ENCODE measurements at regions of chr2 and their contacts with region 1.

Region 1: GRCh38 chr2:218301176-218301819 is 9.0 kb upstream of the TMBIM1 start:
- DNase-seq: peak; percentile 82
- ATAC-seq: peak; percentile 97
- H3K4me3 ChIP-seq: no peak overlapping the region
- H3K27ac ChIP-seq: no peak overlapping the region
- H3K4me1 ChIP-seq: no peaks in the 10 kb centered on the region
- H3K27me3 ChIP-seq: no peaks in the 10 kb centered on the region
- CTCF ChIP-seq: peak; percentile 90 to 93 (median 92)
- EP300 ChIP-seq: no peak
- POLR2A ChIP-seq: no peak
- RAD21 ChIP-seq: peak; percentile 97

Region 2: DNA sequence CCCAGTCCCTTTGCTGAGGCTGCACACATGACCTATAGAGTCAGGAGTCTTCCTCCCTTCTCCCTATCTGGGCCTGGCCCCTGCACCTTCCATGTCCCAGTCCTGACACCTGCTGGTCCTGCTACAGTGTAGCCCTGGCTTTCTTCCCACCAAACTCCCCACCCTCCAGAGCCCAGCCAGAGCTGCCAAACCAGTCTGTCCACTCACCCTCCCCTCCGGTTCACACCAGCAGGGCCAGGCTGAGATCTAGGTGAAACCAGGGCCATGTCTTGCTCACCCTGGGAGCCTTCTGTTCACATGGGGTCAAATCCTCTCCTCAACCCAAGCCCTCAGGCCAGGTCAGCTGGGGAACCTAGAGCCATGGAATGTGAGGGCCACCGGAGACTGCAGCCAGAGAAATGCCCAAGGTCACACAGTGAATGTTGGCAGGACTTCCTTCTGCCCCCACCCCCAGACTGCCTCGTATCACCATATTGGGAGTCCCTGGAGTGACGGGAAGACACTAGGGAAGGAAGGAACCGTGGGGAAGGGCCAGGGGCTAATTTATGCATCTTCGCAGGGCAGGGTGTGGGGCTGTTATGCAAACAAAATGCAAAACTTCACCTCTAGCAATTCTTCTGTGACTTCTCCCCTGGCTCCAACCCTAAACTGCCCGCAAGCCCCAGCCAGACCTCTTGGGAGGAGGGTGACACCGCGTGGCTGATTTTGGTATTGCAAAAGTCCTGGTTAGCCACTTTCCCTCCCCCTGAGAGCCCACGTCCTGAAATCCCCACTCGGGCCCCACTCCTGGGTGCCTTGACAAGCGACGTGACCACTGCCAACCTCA is 313.1 kb before region 1 on chr2:
- CTCF ChIA-PET with region 1: no interaction called
- POLR2A ChIA-PET with region 1: no interaction called
- RAD21 ChIA-PET with region 1: no interaction called
- SMC1A ChIA-PET with region 1: no interaction called
- in situ Hi-C with region 1: no loop called
- intact Hi-C with region 1: no loop called
- DNase-seq: no peak
- ATAC-seq: peak; percentile 94
- H3K4me3 ChIP-seq: no peak overlapping the region
- H3K27ac ChIP-seq: no peak overlapping the region
- H3K4me1 ChIP-seq: no peaks in the 10 kb centered on the region
- H3K27me3 ChIP-seq: no peaks in the 10 kb centered on the region; a peak in 1 of 4 replicates
- CTCF ChIP-seq: peak; percentile 78 to 82 (median 81)
- EP300 ChIP-seq: no peak
- POLR2A ChIP-seq: no peak
- RAD21 ChIP-seq: peak; percentile 83

Region 3: GRCh38 chr2:218286570-218287459 is 14.5 kb before region 1 on chr2:
- CTCF ChIA-PET with region 1: interaction called, 14 read pairs
- POLR2A ChIA-PET with region 1: interaction called, 4 read pairs
- RAD21 ChIA-PET with region 1: interaction called, 5 read pairs
- SMC1A ChIA-PET with region 1: interaction called, 8 read pairs
- in situ Hi-C with region 1: no loop called
- intact Hi-C with region 1: no loop called
- DNase-seq: peak; percentile 72
- ATAC-seq: peak; percentile 76
- H3K4me3 ChIP-seq: peak overlapping the region; percentile 64
- H3K27ac ChIP-seq: peak overlapping the region; percentile 95
- H3K4me1 ChIP-seq: peaks cover 55% of the 10 kb centered on the region
- H3K27me3 ChIP-seq: no peaks in the 10 kb centered on the region
- CTCF ChIP-seq: no peak
- EP300 ChIP-seq: no peak
- POLR2A ChIP-seq: peak; percentile 57; the same call in 1 of the 2 replicates
- RAD21 ChIP-seq: no peak

Region 4: DNA sequence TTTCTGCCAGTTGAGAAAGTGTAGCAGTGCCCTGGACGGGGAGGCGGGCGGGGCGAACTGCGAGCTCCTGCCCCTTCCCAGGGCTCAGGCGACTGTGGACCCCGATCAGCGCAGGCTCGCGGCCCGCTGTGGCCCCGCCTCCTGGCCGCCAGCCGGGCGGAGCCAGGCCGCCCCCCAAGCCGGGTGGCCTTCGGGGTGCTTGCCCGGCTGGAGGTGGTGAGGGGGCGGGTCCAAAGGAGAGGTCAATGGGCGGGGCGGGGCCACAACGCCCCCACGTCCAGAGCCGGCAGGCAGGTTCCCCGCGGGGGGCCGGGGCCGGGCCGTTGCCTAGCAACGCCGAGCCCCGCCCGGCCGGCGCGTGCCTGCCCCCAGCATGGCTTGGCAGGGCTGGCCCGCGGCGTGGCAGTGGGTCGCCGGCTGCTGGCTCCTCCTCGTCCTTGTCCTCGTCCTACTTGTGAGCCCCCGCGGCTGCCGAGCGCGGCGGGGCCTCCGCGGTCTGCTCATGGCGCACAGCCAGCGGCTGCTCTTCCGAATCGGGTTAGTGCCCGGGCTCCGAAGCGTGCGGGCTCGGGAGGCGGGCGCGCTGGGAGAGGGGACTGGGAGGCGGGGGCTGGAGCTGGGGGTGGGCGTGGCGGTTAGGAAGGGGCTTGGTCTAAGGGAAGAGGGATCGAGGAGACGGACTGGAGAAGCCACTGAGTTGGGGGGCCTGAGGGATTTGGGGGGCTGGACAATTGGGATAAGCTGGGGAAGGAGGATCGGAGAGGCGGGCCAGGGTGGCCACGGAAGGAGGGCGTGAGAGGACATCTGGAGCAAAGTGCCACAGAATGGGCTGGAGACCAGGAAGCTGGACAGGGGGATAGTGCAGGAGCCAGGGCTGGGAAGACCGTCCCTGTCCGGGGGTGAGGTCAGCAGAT is 21.9 kb after region 1 on chr2:
- CTCF ChIA-PET with region 1: interaction called, 15 read pairs
- POLR2A ChIA-PET with region 1: interaction called, 10 read pairs
- RAD21 ChIA-PET with region 1: interaction called, 6 read pairs
- SMC1A ChIA-PET with region 1: interaction called, 9 read pairs
- in situ Hi-C with region 1: no loop called
- intact Hi-C with region 1: no loop called
- DNase-seq: no peak
- ATAC-seq: peak; percentile 87
- H3K4me3 ChIP-seq: peak overlapping the region; percentile 69
- H3K27ac ChIP-seq: no peak overlapping the region
- H3K4me1 ChIP-seq: peaks cover 15% of the 10 kb centered on the region
- H3K27me3 ChIP-seq: no peaks in the 10 kb centered on the region
- CTCF ChIP-seq: no peak
- EP300 ChIP-seq: no peak
- POLR2A ChIP-seq: peak; percentile 35; the same call in 1 of the 2 replicates
- RAD21 ChIP-seq: no peak

Region 5: GRCh38 chr2:218329027-218329825 is 27.9 kb after region 1 on chr2:
- CTCF ChIA-PET with region 1: interaction called, 15 read pairs
- POLR2A ChIA-PET with region 1: no interaction called
- RAD21 ChIA-PET with region 1: interaction called, 7 read pairs
- SMC1A ChIA-PET with region 1: interaction called, 7 read pairs
- in situ Hi-C with region 1: no loop called
- intact Hi-C with region 1: no loop called
- DNase-seq: peak; percentile 77
- ATAC-seq: peak; percentile 81
- H3K4me3 ChIP-seq: peak overlapping the region; percentile 12; the same call in 1 of the 2 replicates
- H3K27ac ChIP-seq: peak overlapping the region; percentile 77
- H3K4me1 ChIP-seq: peaks cover 49% of the 10 kb centered on the region
- H3K27me3 ChIP-seq: no peaks in the 10 kb centered on the region
- CTCF ChIP-seq: no peak
- EP300 ChIP-seq: 0 out of 4 replicates have a peak, but pooled peaks of 1 of the 2 experiments have one; percentile 39
- POLR2A ChIP-seq: no peak
- RAD21 ChIP-seq: no peak

Region 6: DNA sequence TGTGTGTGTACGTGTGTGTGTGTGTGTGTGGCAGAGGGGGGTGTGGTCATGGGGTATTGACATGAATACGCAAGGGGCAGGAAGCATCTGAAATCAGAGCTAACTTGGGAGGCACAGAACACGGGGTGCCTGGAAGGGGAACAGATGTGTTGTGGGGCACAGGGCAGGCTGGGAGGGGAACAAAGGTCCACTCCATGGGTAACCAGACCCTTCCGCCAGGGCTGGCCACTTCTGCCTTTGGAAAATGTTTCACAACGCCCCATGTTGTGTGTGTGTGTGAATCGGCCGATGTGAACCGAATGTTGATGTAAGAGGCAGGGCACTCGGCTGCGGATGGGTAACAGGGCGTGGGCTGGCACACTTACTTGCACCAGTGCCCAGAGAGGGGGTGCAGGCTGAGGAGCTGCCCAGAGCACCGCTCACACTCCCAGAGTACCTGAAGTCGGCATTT is 80.6 kb after region 1 on chr2 and contains the start of gene SLC11A1:
- CTCF ChIA-PET with region 1: interaction called, 10 read pairs
- POLR2A ChIA-PET with region 1: no interaction called
- RAD21 ChIA-PET with region 1: no interaction called
- SMC1A ChIA-PET with region 1: interaction called, 3 read pairs
- in situ Hi-C with region 1: loop called (anchors 25 kb)
- intact Hi-C with region 1: no loop called
- DNase-seq: no peak
- ATAC-seq: no peak
- H3K4me3 ChIP-seq: no peak within 1 kb of the TSS
- H3K27ac ChIP-seq: no peak within 1 kb of the TSS
- H3K4me1 ChIP-seq: no peaks in the 10 kb centered on the region
- H3K27me3 ChIP-seq: no peaks in the 10 kb centered on the region; a peak in 1 of 4 replicates
- CTCF ChIP-seq: no peak
- EP300 ChIP-seq: no peak
- POLR2A ChIP-seq: no peak
- RAD21 ChIP-seq: no peak
- polyA plus RNA-seq, gene SLC11A1: 0.03 to 0.07 TPM

Region 7: GRCh38 chr2:218466016-218466521 is 164.8 kb after region 1 on chr2:
- CTCF ChIA-PET with region 1: interaction called, 7 read pairs
- POLR2A ChIA-PET with region 1: no interaction called
- RAD21 ChIA-PET with region 1: interaction called, 5 read pairs
- SMC1A ChIA-PET with region 1: interaction called, 3 read pairs
- in situ Hi-C with region 1: no loop called
- intact Hi-C with region 1: loop called (anchors 2 kb)
- DNase-seq: no peak
- ATAC-seq: peak; percentile 41; the same call in 1 of the 3 replicates
- H3K4me3 ChIP-seq: no peak overlapping the region
- H3K27ac ChIP-seq: no peak overlapping the region
- H3K4me1 ChIP-seq: no peaks in the 10 kb centered on the region
- H3K27me3 ChIP-seq: no peaks in the 10 kb centered on the region
- CTCF ChIP-seq: peak; percentile 14 to 42 (median 38); a peak in 3 of 6 replicates
- EP300 ChIP-seq: no peak
- POLR2A ChIP-seq: no peak
- RAD21 ChIP-seq: no peak